AG04450 (cell line): ENCODE measurements at regions of chr9 and their contacts with region 1.

Region 1: GRCh38 chr9:7055201-7055903 is 297.6 kb downstream of the KDM4C start:
- DNase-seq: no peak
- H3K4me3 ChIP-seq: no peak overlapping the region
- H3K27ac ChIP-seq: no peak overlapping the region
- H3K27me3 ChIP-seq: no peaks in the 10 kb centered on the region
- CTCF ChIP-seq: no peak

Region 2: DNA sequence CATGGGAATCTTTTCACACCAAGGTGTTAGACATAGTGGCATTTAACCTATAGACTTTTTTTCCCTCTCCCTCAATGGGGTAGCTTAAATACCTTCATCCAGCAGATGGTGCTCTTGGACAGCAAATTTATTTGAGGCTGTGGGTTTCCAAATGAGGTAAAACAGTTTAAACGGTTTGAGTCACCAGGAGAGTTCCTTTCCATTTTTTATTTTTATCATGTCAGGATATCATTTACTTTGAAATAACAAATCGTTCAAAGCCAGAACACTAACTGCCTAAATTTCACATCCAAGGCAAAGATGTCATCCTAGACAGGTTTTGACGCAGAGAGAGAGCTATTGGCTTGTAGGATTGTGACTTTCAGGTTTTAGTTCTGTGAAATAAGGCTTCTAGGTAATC is 227.9 kb before region 1 on chr9:
- CTCF ChIA-PET with region 1: interaction called, 31 read pairs
- POLR2A ChIA-PET with region 1: no interaction called
- DNase-seq: peak; percentile 13
- H3K4me3 ChIP-seq: no peak overlapping the region
- H3K27ac ChIP-seq: no peak overlapping the region
- H3K27me3 ChIP-seq: no peaks in the 10 kb centered on the region
- CTCF ChIP-seq: peak; percentile 72

Region 3: DNA sequence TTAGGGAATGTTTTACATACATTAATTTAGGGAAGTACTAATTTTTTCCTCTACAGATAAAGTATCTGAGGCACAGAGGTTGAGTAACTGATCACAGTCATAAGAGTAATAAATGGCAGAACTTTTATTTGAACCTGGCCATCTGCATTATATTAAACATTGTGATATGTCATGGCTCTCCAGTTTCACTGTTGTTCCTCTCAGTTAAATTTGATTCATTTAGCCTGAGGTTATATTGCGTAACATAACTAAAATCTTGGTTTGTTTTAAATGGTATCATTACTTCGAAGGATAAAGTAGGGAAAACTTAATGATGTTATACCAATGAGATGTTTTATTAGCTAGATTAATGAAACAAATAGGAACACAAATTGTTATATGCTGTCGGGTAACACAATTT is 13.2 kb before region 1 on chr9:
- CTCF ChIA-PET with region 1: interaction called, 29 read pairs
- POLR2A ChIA-PET with region 1: no interaction called
- DNase-seq: no peak
- H3K4me3 ChIP-seq: no peak overlapping the region
- H3K27ac ChIP-seq: no peak overlapping the region
- H3K27me3 ChIP-seq: no peaks in the 10 kb centered on the region
- CTCF ChIP-seq: no peak

Region 4: GRCh38 chr9:7186175-7186574 is 130.8 kb after region 1 on chr9:
- CTCF ChIA-PET with region 1: interaction called, 12 read pairs
- POLR2A ChIA-PET with region 1: interaction called, 3 read pairs
- DNase-seq: no peak
- H3K4me3 ChIP-seq: no peak overlapping the region
- H3K27ac ChIP-seq: no peak overlapping the region
- H3K27me3 ChIP-seq: no peaks in the 10 kb centered on the region
- CTCF ChIP-seq: peak; percentile 71

Region 5: GRCh38 chr9:7342229-7342628 is 286.9 kb after region 1 on chr9:
- CTCF ChIA-PET with region 1: interaction called, 10 read pairs
- POLR2A ChIA-PET with region 1: no interaction called
- DNase-seq: no peak
- H3K4me3 ChIP-seq: no peak overlapping the region
- H3K27ac ChIP-seq: no peak overlapping the region
- H3K27me3 ChIP-seq: no peaks in the 10 kb centered on the region
- CTCF ChIP-seq: peak; percentile 49

Region 6: DNA sequence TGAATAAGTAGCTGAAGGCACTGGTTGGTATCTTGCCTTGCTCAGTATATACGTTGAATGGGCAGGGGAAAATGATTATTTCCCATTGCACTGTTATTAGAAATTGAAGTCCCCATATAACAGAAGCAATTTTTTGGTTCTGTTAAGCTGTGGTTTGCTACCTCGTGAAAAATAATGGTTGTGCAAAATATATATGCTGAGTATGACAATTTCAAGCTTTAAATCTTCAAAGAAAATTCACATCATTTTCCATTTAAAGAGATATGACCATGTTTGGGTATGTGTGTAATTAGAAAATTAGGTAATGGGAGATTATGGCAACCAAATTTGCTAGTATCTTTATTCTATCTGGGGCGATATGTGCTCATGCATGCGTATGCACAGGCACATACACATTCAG is 604.4 kb after region 1 on chr9:
- CTCF ChIA-PET with region 1: interaction called, 12 read pairs
- POLR2A ChIA-PET with region 1: no interaction called
- DNase-seq: no peak
- H3K4me3 ChIP-seq: no peak overlapping the region
- H3K27ac ChIP-seq: no peak overlapping the region
- H3K27me3 ChIP-seq: no peaks in the 10 kb centered on the region
- CTCF ChIP-seq: no peak